T-cell (primary cell): ENCODE measurements at regions of chrX and their contacts with region 1.

Region 1: GRCh38 chrX:78103623-78104446 is at the start of gene PGK1:
- DNase-seq: peak; percentile 80 to 97 (median 93)
- ATAC-seq: peak; percentile 95 to 98 (median 96)
- H3K4me3 ChIP-seq: peak within 1 kb of the TSS; percentile 89 to 94
- H3K4me3 Mint-ChIP-seq: peak within 1 kb of the TSS; percentile 81 to 94 (median 87)
- H3K27ac ChIP-seq: peak within 1 kb of the TSS; percentile 95
- H3K27ac Mint-ChIP-seq: peak within 1 kb of the TSS; percentile 91 to 92
- H3K4me1 ChIP-seq: peaks cover 12 to 34% of the 10 kb centered on the region in 2 experiments
- H3K4me1 Mint-ChIP-seq: peaks cover 42 to 51% (median 47%) of the 10 kb centered on the region in 3 donors
- H3K27me3 ChIP-seq: no peaks in the 10 kb centered on the region
- H3K27me3 Mint-ChIP-seq: peaks cover 0 to 9% of the 10 kb centered on the region in 2 donors
- total RNA-seq, gene PGK1: 199 to 264 (median 203) TPM

Region 2: GRCh38 chrX:77899081-77899828 is 204.6 kb before region 1 on chrX and contains the start of gene COX7B:
- CTCF ChIA-PET with region 1: interaction called in 1 of 2 experiments, 3 read pairs
- POLR2A ChIA-PET with region 1: interaction called in 1 of 2 experiments, 11 read pairs
- DNase-seq: peak in 34 of 35 experiments; percentile 23 to 92 (median 59)
- ATAC-seq: peak; percentile 66 to 72 (median 67)
- H3K4me3 ChIP-seq: peak within 1 kb of the TSS; percentile 78 to 81
- H3K4me3 Mint-ChIP-seq: peak within 1 kb of the TSS; percentile 82 to 96 (median 88)
- H3K27ac ChIP-seq: peak within 1 kb of the TSS; percentile 89
- H3K27ac Mint-ChIP-seq: peak within 1 kb of the TSS; percentile 88 to 95
- H3K4me1 ChIP-seq: peaks cover 5 to 9% of the 10 kb centered on the region in 2 experiments
- H3K4me1 Mint-ChIP-seq: peaks cover 19 to 29% (median 26%) of the 10 kb centered on the region in 3 donors
- H3K27me3 ChIP-seq: no peaks in the 10 kb centered on the region
- H3K27me3 Mint-ChIP-seq: no peaks in the 10 kb centered on the region
- total RNA-seq, gene COX7B: 101 to 119 (median 109) TPM

Region 3: DNA sequence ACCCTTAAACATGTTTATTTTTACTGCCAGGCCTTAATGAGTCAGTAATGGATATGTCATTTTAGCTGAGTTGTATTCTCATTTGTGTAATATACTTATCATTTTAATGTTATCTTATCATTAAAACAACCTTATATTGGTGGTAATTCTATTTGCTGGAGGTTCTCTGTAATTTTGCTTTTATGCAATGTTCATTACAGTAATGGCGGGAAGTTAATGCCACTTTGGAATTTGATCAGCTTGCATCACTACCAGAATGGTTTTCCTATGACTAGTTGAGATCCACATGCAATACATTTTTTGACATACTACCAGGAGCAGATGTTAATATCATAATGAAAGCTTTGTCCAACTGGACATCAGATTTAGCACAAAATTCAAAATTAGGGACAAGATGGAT is 128.0 kb before region 1 on chrX:
- CTCF ChIA-PET with region 1: no interaction called
- POLR2A ChIA-PET with region 1: no interaction called
- DNase-seq: no peak
- ATAC-seq: no peak
- H3K4me3 ChIP-seq: no peak overlapping the region
- H3K4me3 Mint-ChIP-seq: no peak overlapping the region
- H3K27ac ChIP-seq: no peak overlapping the region
- H3K27ac Mint-ChIP-seq: no peak overlapping the region
- H3K4me1 ChIP-seq: no peaks in the 10 kb centered on the region
- H3K4me1 Mint-ChIP-seq: no peaks in the 10 kb centered on the region
- H3K27me3 ChIP-seq: no peaks in the 10 kb centered on the region
- H3K27me3 Mint-ChIP-seq: no peaks in the 10 kb centered on the region

Region 4: GRCh38 chrX:78063687-78064086 is 40.1 kb before region 1 on chrX:
- CTCF ChIA-PET with region 1: no interaction called
- POLR2A ChIA-PET with region 1: no interaction called
- DNase-seq: no peak
- ATAC-seq: no peak
- H3K4me3 ChIP-seq: no peak overlapping the region
- H3K4me3 Mint-ChIP-seq: no peak overlapping the region
- H3K27ac ChIP-seq: no peak overlapping the region
- H3K27ac Mint-ChIP-seq: no peak overlapping the region
- H3K4me1 ChIP-seq: no peaks in the 10 kb centered on the region
- H3K4me1 Mint-ChIP-seq: peaks cover 0 to 9% (median 8%) of the 10 kb centered on the region in 3 donors
- H3K27me3 ChIP-seq: no peaks in the 10 kb centered on the region
- H3K27me3 Mint-ChIP-seq: peaks cover 0 to 3% of the 10 kb centered on the region in 2 donors